BJ (cell line): ENCODE measurements at regions of chr2 and their contacts with region 1.

Region 1: DNA sequence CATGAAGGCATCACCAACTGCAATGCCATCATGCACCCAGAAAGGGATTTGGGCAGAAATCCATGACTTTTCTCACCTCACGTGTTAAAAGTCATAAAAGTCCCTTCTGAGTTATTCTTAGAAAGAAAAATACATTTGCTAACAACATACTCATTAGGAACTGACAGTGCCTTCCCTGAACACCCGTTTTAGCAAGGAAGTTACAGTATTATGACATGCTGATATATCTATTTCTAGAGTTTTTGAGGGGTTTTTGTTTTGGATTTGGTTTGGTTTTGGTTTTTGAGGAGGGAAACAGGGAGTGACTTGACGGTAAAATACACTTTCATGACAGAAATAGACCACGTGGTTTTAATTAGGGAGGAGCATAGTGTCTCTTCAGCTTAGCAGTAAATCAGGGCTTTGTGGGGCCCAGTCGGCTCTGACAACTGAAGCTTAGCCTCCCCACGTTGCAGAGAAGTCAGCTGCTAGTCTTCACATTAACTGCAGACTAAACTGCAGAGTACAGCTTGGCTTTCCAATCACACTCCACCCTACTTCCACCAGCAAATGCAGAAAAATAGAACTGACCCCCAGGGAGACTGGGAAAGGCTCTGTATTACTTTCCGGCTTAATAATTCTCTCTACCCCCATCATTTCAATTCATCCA is 141.4 kb downstream of the FAM124B start:
- DNase-seq: no peak
- H3K4me3 ChIP-seq: no peak overlapping the region
- H3K27me3 ChIP-seq: no peaks in the 10 kb centered on the region
- CTCF ChIP-seq: no peak

Region 2: GRCh38 chr2:223932816-223933800 is 327.4 kb before region 1 on chr2:
- CTCF ChIA-PET with region 1: interaction called, 10 read pairs
- POLR2A ChIA-PET with region 1: no interaction called
- DNase-seq: no peak
- H3K4me3 ChIP-seq: no peak overlapping the region
- H3K27me3 ChIP-seq: no peaks in the 10 kb centered on the region
- CTCF ChIP-seq: no peak

Region 3: DNA sequence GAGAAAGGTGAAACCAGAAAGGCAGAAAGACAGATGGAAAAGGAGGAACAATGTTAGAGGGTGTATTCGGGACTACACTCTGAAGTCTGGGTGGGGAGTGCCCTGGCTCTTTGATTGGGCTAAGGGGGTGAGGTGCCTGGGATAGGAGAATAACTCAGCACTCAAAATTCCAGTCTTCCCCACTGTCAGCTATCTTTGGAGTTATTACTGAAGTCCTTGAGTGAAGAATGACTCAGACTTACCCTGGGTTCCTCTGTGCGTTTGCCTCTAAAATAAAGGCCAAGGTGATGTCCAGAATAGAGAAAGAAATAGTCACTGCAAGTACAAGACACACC is 69.6 kb before region 1 on chr2:
- CTCF ChIA-PET with region 1: no interaction called
- POLR2A ChIA-PET with region 1: no interaction called
- DNase-seq: no peak
- H3K4me3 ChIP-seq: no peak overlapping the region
- H3K27me3 ChIP-seq: no peaks in the 10 kb centered on the region
- CTCF ChIP-seq: no peak